CD8-positive, alpha-beta T cell (primary cell): ENCODE measurements at regions of chr13 and their contacts with region 1.

Region 1: GRCh38 chr13:106063591-106064313 is 471.7 kb downstream of the EFNB2 start:
- DNase-seq: no peak
- ATAC-seq: no peak
- H3K4me3 ChIP-seq: no peak overlapping the region
- H3K4me3 Mint-ChIP-seq: no peak overlapping the region
- H3K27ac ChIP-seq: no peak overlapping the region
- H3K27ac Mint-ChIP-seq: no peak overlapping the region
- H3K4me1 ChIP-seq: no peaks in the 10 kb centered on the region
- H3K4me1 Mint-ChIP-seq: no peaks in the 10 kb centered on the region
- H3K27me3 ChIP-seq: no peaks in the 10 kb centered on the region
- H3K27me3 Mint-ChIP-seq: no peaks in the 10 kb centered on the region
- CTCF ChIP-seq: no peak

Region 2: GRCh38 chr13:105638426-105638825 is 425.3 kb before region 1 on chr13:
- CTCF ChIA-PET with region 1: no interaction called
- POLR2A ChIA-PET with region 1: no interaction called
- intact Hi-C with region 1: loop called in 1 of 2 experiments (anchors 10 kb)
- DNase-seq: no peak
- ATAC-seq: no peak
- H3K4me3 ChIP-seq: no peak overlapping the region
- H3K4me3 Mint-ChIP-seq: no peak overlapping the region
- H3K27ac ChIP-seq: no peak overlapping the region
- H3K27ac Mint-ChIP-seq: no peak overlapping the region
- H3K4me1 ChIP-seq: no peaks in the 10 kb centered on the region
- H3K4me1 Mint-ChIP-seq: no peaks in the 10 kb centered on the region
- H3K27me3 ChIP-seq: no peaks in the 10 kb centered on the region
- H3K27me3 Mint-ChIP-seq: no peaks in the 10 kb centered on the region
- CTCF ChIP-seq: no peak

Region 3: DNA sequence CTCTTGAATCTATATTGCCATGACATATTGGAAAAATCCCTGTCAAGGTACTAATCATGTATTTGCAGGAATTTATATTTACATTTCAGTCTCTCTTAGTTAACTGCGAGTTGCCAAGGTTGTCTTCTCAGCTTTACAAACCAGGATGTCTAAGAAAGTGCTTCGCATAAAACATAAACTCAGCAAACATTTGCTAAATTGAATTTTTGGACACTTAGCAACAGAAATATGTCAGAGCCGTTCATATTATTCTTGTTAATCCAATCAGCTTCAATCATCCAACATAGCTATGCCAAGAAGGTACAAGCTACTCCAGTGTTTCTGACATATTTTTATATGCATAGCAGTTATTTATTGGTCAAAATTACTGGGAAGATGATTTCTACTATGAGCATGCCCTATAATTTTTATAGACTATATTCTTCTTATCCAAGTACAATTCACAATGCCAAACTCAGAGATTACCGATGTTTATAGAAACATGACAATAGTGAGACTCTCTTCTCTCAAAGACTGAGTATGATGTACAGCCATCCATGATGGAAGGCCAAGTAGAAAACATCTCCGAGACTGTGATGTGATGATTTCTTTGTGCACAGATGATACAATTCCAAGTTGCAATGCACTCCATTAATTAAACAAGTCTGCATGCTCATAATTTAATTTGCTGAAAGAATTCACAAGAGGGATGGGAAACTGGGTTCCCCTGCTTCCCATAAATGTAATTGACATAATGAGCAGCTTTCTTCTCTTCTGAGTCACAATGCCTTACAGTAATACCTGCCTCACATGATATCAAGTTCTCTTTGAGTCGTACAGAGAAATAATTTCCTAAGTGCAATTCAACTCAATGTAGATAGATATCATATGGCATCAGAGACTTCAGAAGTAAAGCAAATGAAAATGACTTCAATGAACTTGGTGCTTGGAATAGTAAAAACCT is 304.6 kb before region 1 on chr13:
- CTCF ChIA-PET with region 1: no interaction called
- POLR2A ChIA-PET with region 1: no interaction called
- intact Hi-C with region 1: no loop called
- DNase-seq: no peak
- ATAC-seq: no peak
- H3K4me3 ChIP-seq: no peak overlapping the region
- H3K4me3 Mint-ChIP-seq: no peak overlapping the region
- H3K27ac ChIP-seq: no peak overlapping the region
- H3K27ac Mint-ChIP-seq: no peak overlapping the region
- H3K4me1 ChIP-seq: no peaks in the 10 kb centered on the region
- H3K4me1 Mint-ChIP-seq: no peaks in the 10 kb centered on the region
- H3K27me3 ChIP-seq: no peaks in the 10 kb centered on the region
- H3K27me3 Mint-ChIP-seq: no peaks in the 10 kb centered on the region
- CTCF ChIP-seq: no peak

Region 4: DNA sequence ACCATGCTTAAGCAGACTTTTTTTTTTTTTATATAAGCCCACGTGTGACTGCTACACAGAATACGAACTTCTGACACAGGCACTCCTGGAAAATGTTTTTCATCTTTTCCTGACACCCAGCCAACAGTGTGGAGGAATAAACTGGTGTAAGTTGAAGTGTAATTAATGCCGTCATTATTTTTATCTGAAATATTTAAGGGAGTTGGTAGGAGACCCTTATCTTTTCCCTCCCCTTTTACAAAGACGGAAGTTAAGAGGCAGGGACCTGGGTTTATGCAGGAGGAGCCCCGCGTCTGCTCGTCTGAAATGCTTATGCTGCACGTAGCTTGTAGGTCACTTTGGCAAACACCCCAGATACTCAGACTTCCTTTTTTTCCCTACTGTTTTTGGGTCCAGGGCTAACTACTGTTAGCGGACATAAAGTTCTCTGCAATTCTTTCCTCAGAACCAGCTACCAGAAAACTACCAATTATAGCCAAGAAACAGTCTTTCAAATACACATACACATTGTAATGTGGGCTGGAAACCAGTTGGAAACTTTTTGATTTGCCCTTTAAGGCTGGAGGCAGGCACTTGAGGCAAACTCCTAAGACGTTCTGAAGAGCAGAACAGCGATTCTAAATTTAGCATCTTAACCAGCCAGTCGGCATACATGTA is 420.9 kb after region 1 on chr13:
- CTCF ChIA-PET with region 1: no interaction called
- POLR2A ChIA-PET with region 1: no interaction called
- intact Hi-C with region 1: loop called in 1 of 2 experiments (anchors 5 kb)
- DNase-seq: no peak
- ATAC-seq: no peak
- H3K4me3 ChIP-seq: no peak overlapping the region
- H3K4me3 Mint-ChIP-seq: no peak overlapping the region
- H3K27ac ChIP-seq: no peak overlapping the region
- H3K27ac Mint-ChIP-seq: no peak overlapping the region
- H3K4me1 ChIP-seq: no peaks in the 10 kb centered on the region
- H3K4me1 Mint-ChIP-seq: no peaks in the 10 kb centered on the region
- H3K27me3 ChIP-seq: peaks cover 0 to 3% of the 10 kb centered on the region in 2 experiments
- H3K27me3 Mint-ChIP-seq: peaks cover 53% of the 10 kb centered on the region
- CTCF ChIP-seq: no peak